Mammary epithelial cell (primary cell): ENCODE measurements at regions of chr6 and their contacts with region 1.

Region 1: GRCh38 chr6:18503593-18504231 is 116.6 kb downstream of the RNF144B start:
- DNase-seq: peak; percentile 64
- H3K4me3 ChIP-seq: peak overlapping the region; percentile 0 to 34 (median 21)
- H3K27ac ChIP-seq: peak overlapping the region; percentile 66
- H3K4me1 ChIP-seq: peaks cover 18% of the 10 kb centered on the region
- H3K27me3 ChIP-seq: no peaks in the 10 kb centered on the region
- CTCF ChIP-seq: peak; percentile 95 to 98

Region 2: GRCh38 chr6:17589406-17590096 is 914.2 kb before region 1 on chr6:
- CTCF ChIA-PET with region 1: no interaction called
- dilution Hi-C with region 1: no loop called
- in situ Hi-C with region 1: no loop called
- intact Hi-C with region 1: loop called (anchors 5 kb)
- DNase-seq: peak; percentile 91
- H3K4me3 ChIP-seq: no peak overlapping the region
- H3K27ac ChIP-seq: peak overlapping the region; percentile 42
- H3K4me1 ChIP-seq: peaks cover 12% of the 10 kb centered on the region
- H3K27me3 ChIP-seq: no peaks in the 10 kb centered on the region
- CTCF ChIP-seq: peak in 1 of 2 donors; percentile 32

Region 3: DNA sequence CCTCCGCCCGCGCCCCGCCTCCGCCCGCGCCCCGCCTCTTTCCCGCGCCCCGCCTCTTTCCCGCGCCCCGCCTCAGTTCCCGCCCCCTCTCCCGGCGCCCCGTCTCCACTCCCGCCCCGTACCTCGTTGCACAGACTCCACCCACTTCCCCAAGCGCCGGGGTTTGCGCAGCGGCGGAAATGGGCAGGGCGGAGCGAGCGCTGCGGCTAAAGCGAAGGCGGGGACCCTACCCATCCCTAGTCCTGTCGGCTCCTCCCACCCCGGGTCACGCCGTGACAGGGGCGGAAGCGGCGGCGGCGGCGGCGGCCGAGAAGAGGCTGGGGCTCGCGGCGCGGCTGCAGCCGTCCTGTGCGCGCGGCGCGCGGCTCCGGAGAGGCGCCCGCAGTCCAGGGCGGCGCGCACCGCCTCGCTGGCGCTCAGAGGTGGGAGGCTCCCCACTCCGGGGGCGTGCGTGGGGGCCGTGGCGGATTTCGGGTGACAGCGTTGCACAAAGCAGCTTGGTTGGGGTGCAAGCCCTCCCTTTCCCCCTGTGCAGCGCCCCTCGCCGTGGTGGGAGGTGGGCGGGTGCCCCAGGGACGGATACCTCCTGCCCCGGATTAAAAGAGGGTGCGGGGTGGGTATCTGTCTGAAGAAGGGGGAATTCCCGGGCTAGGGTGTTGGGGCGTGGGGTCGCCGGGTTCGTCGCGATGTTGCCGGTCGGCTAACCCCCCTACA is 348.4 kb before region 1 on chr6 and contains the start of gene KDM1B:
- CTCF ChIA-PET with region 1: no interaction called
- dilution Hi-C with region 1: no loop called
- in situ Hi-C with region 1: no loop called
- intact Hi-C with region 1: loop called (anchors 5 kb)
- DNase-seq: peak; percentile 98
- H3K4me3 ChIP-seq: peak within 1 kb of the TSS; percentile 97 to 99 (median 98)
- H3K27ac ChIP-seq: peak within 1 kb of the TSS; percentile 98
- H3K4me1 ChIP-seq: peaks cover 16% of the 10 kb centered on the region
- H3K27me3 ChIP-seq: no peaks in the 10 kb centered on the region
- CTCF ChIP-seq: no peak
- total RNA-seq, gene KDM1B: 19.5 to 25.1 TPM

Region 4: GRCh38 chr6:18317850-18318249 is 185.9 kb before region 1 on chr6:
- CTCF ChIA-PET with region 1: no interaction called
- dilution Hi-C with region 1: no loop called
- in situ Hi-C with region 1: loop called (anchors 5 to 10 kb)
- intact Hi-C with region 1: no loop called
- DNase-seq: no peak
- H3K4me3 ChIP-seq: no peak overlapping the region
- H3K27ac ChIP-seq: no peak overlapping the region
- H3K4me1 ChIP-seq: no peaks in the 10 kb centered on the region
- H3K27me3 ChIP-seq: no peaks in the 10 kb centered on the region
- CTCF ChIP-seq: no peak

Region 5: DNA sequence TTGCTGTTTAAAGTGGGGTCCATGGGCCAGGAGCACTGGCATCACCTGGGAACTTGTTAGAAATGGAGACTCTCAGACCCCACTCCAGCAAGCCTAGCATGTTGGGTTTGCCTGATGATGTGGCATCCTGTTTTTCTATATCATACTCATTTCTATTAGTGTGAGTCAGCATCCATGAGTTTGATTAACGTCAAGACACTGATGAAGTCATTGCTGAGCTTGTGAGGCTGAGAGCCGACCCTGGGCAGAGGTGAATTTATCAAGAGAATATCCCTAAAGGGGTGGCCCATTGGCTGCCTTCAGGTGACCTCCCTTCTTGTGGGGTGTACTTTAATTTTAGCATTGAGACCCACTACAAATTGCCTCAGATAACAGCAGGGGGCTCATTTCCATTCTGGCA is 160.0 kb before region 1 on chr6:
- CTCF ChIA-PET with region 1: no interaction called
- dilution Hi-C with region 1: no loop called
- in situ Hi-C with region 1: no loop called
- intact Hi-C with region 1: loop called (anchors 5 kb)
- DNase-seq: peak; percentile 94
- H3K4me3 ChIP-seq: no peak overlapping the region
- H3K27ac ChIP-seq: peak overlapping the region; percentile 97
- H3K4me1 ChIP-seq: peaks cover 58% of the 10 kb centered on the region
- H3K27me3 ChIP-seq: no peaks in the 10 kb centered on the region
- CTCF ChIP-seq: no peak

Region 6: GRCh38 chr6:18477301-18477941 is 26.3 kb before region 1 on chr6:
- CTCF ChIA-PET with region 1: no interaction called
- dilution Hi-C with region 1: no loop called
- in situ Hi-C with region 1: no loop called
- intact Hi-C with region 1: no loop called
- DNase-seq: no peak
- H3K4me3 ChIP-seq: no peak overlapping the region
- H3K27ac ChIP-seq: no peak overlapping the region
- H3K4me1 ChIP-seq: no peaks in the 10 kb centered on the region
- H3K27me3 ChIP-seq: no peaks in the 10 kb centered on the region
- CTCF ChIP-seq: no peak